ENCODE measurements at regions of chr20 and their contacts with region 1.

Region 1: DNA sequence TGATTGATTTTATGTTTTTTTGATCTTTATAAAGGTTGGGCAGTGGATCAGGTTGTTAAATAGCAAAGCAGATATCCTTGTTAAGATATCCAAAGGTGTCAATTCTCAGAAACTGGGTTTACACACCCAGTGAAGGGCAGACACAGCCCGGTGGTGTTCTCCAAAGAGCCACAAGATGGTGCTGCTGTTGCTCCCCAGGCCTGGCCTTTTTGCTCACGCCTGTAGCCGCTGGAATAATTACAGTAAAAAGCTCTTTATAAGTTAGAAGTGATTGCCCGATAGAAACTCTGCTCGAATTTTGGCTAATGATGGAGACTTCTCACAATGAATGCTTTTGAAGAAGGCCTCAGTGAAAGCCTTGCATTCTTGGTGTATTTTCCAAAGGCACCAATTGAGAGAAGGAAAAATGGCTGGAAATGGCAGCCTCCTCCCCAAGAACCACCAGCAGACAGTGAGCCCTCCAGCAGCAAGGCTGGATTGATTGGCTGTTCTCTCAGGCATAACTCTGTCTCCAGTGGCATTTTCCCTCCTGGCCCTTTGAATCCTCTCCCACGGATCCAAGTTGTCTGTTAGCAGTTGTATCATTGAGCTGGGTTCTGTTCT is 120.5 kb upstream of the CHD6 start:
- DNase-seq: peak; percentile 38
- H3K4me3 ChIP-seq: no peak overlapping the region
- H3K27ac ChIP-seq: no peak overlapping the region
- H3K4me1 ChIP-seq: no peaks in the 10 kb centered on the region
- H3K27me3 ChIP-seq: no peaks in the 10 kb centered on the region
- CTCF ChIP-seq: peak; percentile 73 to 81
- POLR2A ChIP-seq: no peak

Region 2: DNA sequence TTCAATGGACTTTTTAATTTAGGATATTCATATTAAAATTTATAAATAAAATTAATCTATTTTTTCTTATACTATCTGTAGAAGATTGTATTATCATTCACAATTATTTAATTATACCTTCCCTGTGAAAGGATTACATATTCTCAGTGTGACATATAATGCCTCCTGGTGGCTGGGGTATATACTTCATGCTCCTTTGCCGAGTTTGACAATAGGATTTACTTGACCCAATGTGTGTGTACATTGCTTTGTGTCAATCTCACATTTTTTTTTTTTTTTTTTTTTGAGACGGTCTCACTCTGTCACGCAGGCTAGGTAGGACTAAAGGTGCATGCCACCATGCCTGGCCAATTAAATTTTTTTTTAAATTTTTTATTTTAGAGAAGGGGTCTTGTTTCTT is 109.5 kb after region 1 on chr20:
- CTCF ChIA-PET with region 1: no interaction called
- POLR2A ChIA-PET with region 1: no interaction called
- dilution Hi-C with region 1: no loop called
- intact Hi-C with region 1: no loop called
- DNase-seq: no peak
- H3K4me3 ChIP-seq: no peak overlapping the region
- H3K27ac ChIP-seq: no peak overlapping the region
- H3K4me1 ChIP-seq: no peaks in the 10 kb centered on the region
- H3K27me3 ChIP-seq: no peaks in the 10 kb centered on the region
- CTCF ChIP-seq: no peak
- POLR2A ChIP-seq: no peak

Region 3: DNA sequence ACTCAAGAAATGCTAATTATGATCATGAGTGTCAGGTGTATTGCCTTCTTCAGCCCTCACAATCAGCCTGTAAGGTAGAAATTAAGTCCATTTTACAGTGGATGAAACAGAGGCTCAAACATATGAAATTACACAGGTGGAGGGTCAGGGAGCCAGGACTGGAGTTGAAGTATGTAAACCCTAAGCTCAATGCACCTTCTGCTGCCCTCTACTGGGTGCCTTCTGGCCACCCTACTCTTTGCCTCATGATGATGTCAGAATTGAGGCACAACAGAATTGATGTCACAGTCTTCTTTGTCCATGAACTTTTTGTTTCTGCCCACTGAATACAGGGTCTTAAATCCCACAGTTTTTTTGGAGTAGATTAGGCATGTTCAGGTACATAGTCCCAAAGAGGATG is 280.2 kb after region 1 on chr20:
- CTCF ChIA-PET with region 1: interaction called, 27 read pairs
- POLR2A ChIA-PET with region 1: no interaction called
- dilution Hi-C with region 1: no loop called
- intact Hi-C with region 1: loop called (anchors 10 kb)
- DNase-seq: peak; percentile 14
- H3K4me3 ChIP-seq: no peak overlapping the region
- H3K27ac ChIP-seq: no peak overlapping the region
- H3K4me1 ChIP-seq: no peaks in the 10 kb centered on the region
- H3K27me3 ChIP-seq: no peaks in the 10 kb centered on the region
- CTCF ChIP-seq: peak in 1 of 2 donors; percentile 18
- POLR2A ChIP-seq: no peak

Region 4: GRCh38 chr20:43187476-43188233 is 1449.0 kb after region 1 on chr20:
- CTCF ChIA-PET with region 1: interaction called, 92 read pairs
- POLR2A ChIA-PET with region 1: no interaction called
- dilution Hi-C with region 1: no loop called
- intact Hi-C with region 1: loop called (anchors 1 kb)
- DNase-seq: peak; percentile 58
- H3K4me3 ChIP-seq: no peak overlapping the region
- H3K27ac ChIP-seq: no peak overlapping the region
- H3K4me1 ChIP-seq: no peaks in the 10 kb centered on the region
- H3K27me3 ChIP-seq: peaks cover 11 to 15% of the 10 kb centered on the region in 2 experiments
- CTCF ChIP-seq: peak; percentile 83 to 87
- POLR2A ChIP-seq: no peak

Region 5: DNA sequence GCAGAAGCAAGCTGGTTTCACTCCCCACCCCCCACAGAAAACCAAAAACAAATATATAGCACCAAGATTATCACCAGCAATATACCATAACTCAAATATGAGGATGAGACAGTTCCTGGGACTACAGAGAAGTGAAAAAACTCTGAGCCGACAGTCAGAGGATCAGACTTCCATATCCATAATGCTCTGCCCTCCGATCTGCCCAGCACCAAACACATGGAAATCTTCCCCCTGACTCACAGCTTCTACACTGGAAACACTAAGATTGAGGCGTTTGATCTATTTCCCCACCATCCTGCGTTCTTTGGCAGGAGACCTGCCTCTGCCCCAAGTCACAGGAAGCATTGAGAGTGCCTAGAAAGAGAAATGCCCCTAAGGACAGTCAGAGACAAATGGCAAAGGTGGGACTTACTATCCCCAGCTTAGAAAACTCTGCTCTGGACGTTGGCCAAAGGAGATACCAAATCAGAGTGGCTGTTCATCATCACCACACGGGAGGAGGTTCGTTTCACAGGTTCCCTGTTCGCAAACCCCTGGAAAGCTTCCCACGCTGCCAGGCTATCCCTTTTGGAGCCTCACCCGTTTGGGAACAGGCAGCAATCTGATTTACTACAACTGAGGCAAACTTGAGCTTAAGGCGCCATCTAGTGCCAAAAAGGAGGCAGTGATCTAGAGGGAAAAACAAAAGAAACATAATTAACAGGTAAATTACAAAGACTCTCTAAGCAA is 1670.3 kb after region 1 on chr20:
- CTCF ChIA-PET with region 1: interaction called, 85 read pairs
- POLR2A ChIA-PET with region 1: no interaction called
- dilution Hi-C with region 1: no loop called
- intact Hi-C with region 1: loop called (anchors 1 kb)
- DNase-seq: peak; percentile 38
- H3K4me3 ChIP-seq: no peak overlapping the region
- H3K27ac ChIP-seq: no peak overlapping the region
- H3K4me1 ChIP-seq: no peaks in the 10 kb centered on the region
- H3K27me3 ChIP-seq: no peaks in the 10 kb centered on the region
- CTCF ChIP-seq: peak; percentile 52 to 56
- POLR2A ChIP-seq: no peak

Measured in endothelial cell of umbilical vein (primary cell).